ENCODE measurements at regions of chr15 and their contacts with region 1.

Region 1: DNA sequence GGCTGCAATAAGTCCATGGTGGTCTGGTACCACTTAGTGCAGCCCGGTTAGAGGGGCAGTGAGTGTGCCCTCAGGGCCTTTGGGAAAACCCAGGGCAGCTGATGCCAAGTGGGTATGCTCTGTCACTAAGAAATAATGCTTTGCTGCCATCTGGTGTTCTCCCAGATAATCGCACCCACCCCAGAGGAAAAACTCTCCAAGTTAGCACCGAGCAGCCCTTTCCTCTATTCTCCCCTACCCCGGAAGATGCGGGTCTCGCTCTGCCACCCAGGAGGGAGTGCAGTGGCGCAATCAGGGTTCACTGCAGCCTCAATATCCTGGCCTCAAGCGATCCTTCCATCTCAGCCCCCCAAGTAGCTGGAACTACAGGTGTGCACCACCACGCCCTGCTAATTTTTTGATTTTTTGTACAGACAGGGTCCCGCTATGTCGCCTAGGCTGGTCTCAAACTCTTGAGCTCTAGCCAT is 21.3 kb upstream of the DAPK2 start:
- DNase-seq: peak; percentile 67
- H3K4me3 Mint-ChIP-seq: no peak overlapping the region
- H3K27ac Mint-ChIP-seq: no peak overlapping the region
- H3K4me1 Mint-ChIP-seq: peaks cover 7% of the 10 kb centered on the region
- H3K27me3 Mint-ChIP-seq: no peaks in the 10 kb centered on the region
- CTCF ChIP-seq: peak; percentile 75

Region 2: DNA sequence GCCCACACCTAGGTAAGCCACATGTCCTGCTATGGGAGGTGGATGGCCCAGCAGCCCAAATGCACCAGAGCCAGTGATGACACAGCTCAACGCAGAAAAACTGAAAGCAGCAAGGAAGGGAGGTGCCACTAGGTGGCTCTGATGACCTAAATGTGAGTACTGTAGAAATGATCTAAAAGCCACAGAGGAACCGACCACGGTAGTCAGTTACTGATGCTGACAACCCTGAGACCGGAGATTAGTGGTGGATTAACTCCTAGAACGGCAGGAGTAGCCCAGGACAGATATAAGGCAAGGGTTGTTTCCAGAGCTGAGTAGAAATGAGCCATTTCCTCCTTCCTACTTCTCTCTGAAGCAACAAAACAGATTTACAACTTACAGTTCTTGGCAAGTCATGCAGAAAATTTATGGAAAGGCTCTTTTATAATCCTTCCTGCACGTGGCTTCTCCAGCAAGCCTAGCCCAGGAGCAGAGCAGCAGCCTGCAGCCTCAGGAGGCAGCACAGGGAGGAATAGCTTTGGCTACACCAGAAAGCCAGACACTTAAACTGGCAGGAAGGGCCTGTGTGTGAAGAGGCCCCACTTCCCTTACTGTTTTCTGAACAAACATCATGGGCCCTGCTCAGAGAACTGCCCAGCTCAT is 457.3 kb before region 1 on chr15:
- CTCF ChIA-PET with region 1: interaction called, 23 read pairs
- POLR2A ChIA-PET with region 1: no interaction called
- intact Hi-C with region 1: loop called (anchors 1 kb)
- DNase-seq: peak; percentile 78
- H3K4me3 Mint-ChIP-seq: no peak overlapping the region
- H3K27ac Mint-ChIP-seq: no peak overlapping the region
- H3K4me1 Mint-ChIP-seq: peaks cover 7% of the 10 kb centered on the region
- H3K27me3 Mint-ChIP-seq: no peaks in the 10 kb centered on the region
- CTCF ChIP-seq: peak; percentile 50

Region 3: DNA sequence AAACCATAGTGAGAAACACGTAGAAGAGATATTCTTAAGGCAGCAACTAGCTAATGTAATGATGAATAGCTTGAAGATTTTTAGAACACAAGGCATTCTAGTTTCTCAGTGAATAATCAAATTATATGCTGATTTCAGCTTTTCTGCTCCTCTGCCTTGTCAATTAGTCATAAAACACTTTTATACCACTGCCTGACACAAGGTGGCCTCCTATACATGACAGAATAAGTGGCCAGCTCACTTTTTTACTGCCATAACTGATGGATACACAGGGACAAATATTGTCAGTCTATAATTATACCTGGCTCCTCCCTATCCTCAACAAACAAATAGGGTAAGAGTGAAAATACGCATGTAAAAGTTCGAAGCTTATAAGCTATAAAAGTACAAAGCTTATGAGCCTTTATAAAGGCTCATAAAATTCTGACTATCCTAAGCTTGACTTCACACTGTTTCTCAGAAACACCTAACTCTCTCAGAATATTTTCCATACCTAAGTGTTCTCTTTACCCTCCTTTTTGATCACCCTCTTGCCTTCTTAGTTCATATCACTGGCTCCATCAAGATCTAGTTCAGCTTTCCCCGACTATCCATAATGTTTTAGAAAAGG is 315.4 kb before region 1 on chr15:
- CTCF ChIA-PET with region 1: interaction called, 164 read pairs
- POLR2A ChIA-PET with region 1: interaction called, 26 read pairs
- intact Hi-C with region 1: loop called (anchors 1 kb)
- DNase-seq: peak; percentile 68
- H3K4me3 Mint-ChIP-seq: no peak overlapping the region
- H3K27ac Mint-ChIP-seq: peak overlapping the region; percentile 17
- H3K4me1 Mint-ChIP-seq: no peaks in the 10 kb centered on the region
- H3K27me3 Mint-ChIP-seq: no peaks in the 10 kb centered on the region
- CTCF ChIP-seq: peak; percentile 80

Region 4: GRCh38 chr15:63891079-63891767 is 176.4 kb before region 1 on chr15:
- CTCF ChIA-PET with region 1: interaction called, 6 read pairs
- POLR2A ChIA-PET with region 1: no interaction called
- intact Hi-C with region 1: loop called (anchors 5 kb)
- DNase-seq: peak; percentile 83
- H3K4me3 Mint-ChIP-seq: no peak overlapping the region
- H3K27ac Mint-ChIP-seq: no peak overlapping the region
- H3K4me1 Mint-ChIP-seq: no peaks in the 10 kb centered on the region
- H3K27me3 Mint-ChIP-seq: no peaks in the 10 kb centered on the region
- CTCF ChIP-seq: peak; percentile 77

Region 5: GRCh38 chr15:64093627-64094417 is 26.2 kb after region 1 on chr15 and contains the start of gene CIAO2A:
- CTCF ChIA-PET with region 1: interaction called, 11 read pairs
- POLR2A ChIA-PET with region 1: interaction called, 34 read pairs
- intact Hi-C with region 1: no loop called
- DNase-seq: peak; percentile 99
- H3K4me3 Mint-ChIP-seq: peak within 1 kb of the TSS; percentile 92
- H3K27ac Mint-ChIP-seq: peak within 1 kb of the TSS; percentile 96
- H3K4me1 Mint-ChIP-seq: peaks cover 30% of the 10 kb centered on the region
- H3K27me3 Mint-ChIP-seq: no peaks in the 10 kb centered on the region
- CTCF ChIP-seq: no peak
- total RNA-seq, gene CIAO2A: 38.7 and 44.7 TPM in 2 replicates

Region 6: DNA sequence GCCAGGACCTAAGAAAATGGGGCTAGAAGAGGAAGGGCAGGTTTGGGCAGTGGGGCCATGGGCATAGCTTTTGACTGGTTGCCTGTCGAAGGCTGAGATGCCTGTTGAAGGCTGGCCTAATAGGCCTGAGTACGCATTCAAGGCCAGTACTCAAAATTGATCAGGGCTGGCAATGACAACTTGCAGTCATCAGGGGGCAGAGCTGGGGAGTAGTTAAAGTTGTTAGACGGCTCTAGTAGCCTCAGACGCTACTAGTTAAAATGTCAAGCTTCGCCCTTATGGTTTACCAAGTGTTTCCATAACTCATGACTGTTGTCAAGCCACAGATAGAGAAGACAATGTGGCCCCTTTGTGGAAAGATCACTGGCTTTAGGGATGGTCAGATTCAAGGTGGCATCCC is 893.4 kb after region 1 on chr15:
- CTCF ChIA-PET with region 1: no interaction called
- POLR2A ChIA-PET with region 1: no interaction called
- intact Hi-C with region 1: no loop called
- DNase-seq: no peak
- H3K4me3 Mint-ChIP-seq: no peak overlapping the region
- H3K27ac Mint-ChIP-seq: no peak overlapping the region
- H3K4me1 Mint-ChIP-seq: no peaks in the 10 kb centered on the region
- H3K27me3 Mint-ChIP-seq: no peaks in the 10 kb centered on the region
- CTCF ChIP-seq: no peak

Measured in MCF 10A (cell line).